ENCODE measurements at regions of chr18 and their contacts with region 1.

Region 1: DNA sequence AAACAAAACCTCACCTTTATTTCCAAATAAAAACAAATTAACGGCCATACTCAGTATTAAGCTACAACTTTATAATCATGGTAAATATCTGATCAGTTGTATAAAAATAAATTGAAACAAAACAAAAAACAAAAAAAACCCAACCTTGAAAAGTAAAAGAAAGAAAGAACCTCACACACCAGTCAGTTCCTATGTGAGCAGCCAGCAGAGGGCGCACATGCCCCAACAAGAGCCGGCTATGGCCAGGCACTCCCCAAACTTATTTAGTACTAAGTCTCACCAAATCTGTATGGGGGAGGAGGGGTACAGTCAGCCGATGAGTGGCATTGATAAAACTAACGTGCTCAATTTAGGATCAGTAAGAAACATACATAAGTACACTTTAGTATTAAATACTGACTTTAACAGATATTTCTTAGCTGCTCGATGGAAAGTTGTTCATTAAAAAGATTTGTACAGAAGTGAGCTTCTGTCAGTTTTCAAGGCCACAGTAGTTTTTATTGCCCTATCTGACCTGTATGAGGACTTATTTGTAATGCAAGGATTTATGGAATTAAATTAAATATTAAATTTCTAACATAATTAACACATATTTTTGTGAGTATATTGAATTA is 172.6 kb downstream of the TCF4 start:
- DNase-seq: peak; percentile 90
- H3K4me3 ChIP-seq: no peak overlapping the region
- H3K27ac ChIP-seq: peak overlapping the region; percentile 13
- H3K4me1 ChIP-seq: peaks cover 45% of the 10 kb centered on the region
- H3K27me3 ChIP-seq: no peaks in the 10 kb centered on the region
- CTCF ChIP-seq: peak; percentile 79 to 91
- POLR2A ChIP-seq: no peak

Region 2: GRCh38 chr18:55425698-55426097 is 10.3 kb after region 1 on chr18:
- CTCF ChIA-PET with region 1: interaction called, 11 read pairs
- POLR2A ChIA-PET with region 1: no interaction called
- dilution Hi-C with region 1: no loop called
- intact Hi-C with region 1: no loop called
- DNase-seq: no peak
- H3K4me3 ChIP-seq: no peak overlapping the region
- H3K27ac ChIP-seq: no peak overlapping the region
- H3K4me1 ChIP-seq: peaks cover 23% of the 10 kb centered on the region
- H3K27me3 ChIP-seq: no peaks in the 10 kb centered on the region
- CTCF ChIP-seq: no peak
- POLR2A ChIP-seq: no peak

Region 3: GRCh38 chr18:55477860-55478581 is 62.7 kb after region 1 on chr18:
- CTCF ChIA-PET with region 1: interaction called, 6 read pairs
- POLR2A ChIA-PET with region 1: no interaction called
- dilution Hi-C with region 1: no loop called
- intact Hi-C with region 1: loop called (anchors 2 kb)
- DNase-seq: no peak
- H3K4me3 ChIP-seq: peak overlapping the region; percentile 31 to 91 (median 80)
- H3K27ac ChIP-seq: peak overlapping the region; percentile 95
- H3K4me1 ChIP-seq: peaks cover 35% of the 10 kb centered on the region
- H3K27me3 ChIP-seq: no peaks in the 10 kb centered on the region
- CTCF ChIP-seq: no peak
- POLR2A ChIP-seq: no peak

Region 4: DNA sequence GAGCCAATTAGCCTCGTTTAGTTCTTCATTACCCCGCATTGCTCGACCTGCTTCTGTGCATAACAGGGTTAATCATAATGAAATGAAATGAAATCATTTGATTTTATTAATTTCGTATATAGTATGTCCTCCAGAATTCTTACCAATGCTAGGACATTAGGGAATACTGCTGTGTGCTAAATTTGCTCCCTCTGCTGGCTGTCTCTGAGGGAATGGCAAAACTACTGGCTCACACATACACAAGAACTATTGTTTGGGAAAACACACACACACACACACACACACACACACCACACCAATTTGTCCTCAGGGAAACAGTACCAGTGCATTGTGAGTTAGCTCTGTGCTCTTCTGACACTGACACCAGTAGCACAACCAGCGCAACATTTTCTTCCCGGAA is 445.9 kb after region 1 on chr18:
- CTCF ChIA-PET with region 1: interaction called, 10 read pairs
- POLR2A ChIA-PET with region 1: no interaction called
- dilution Hi-C with region 1: no loop called
- intact Hi-C with region 1: loop called (anchors 10 kb)
- DNase-seq: peak; percentile 65
- H3K4me3 ChIP-seq: no peak overlapping the region
- H3K27ac ChIP-seq: no peak overlapping the region
- H3K4me1 ChIP-seq: peaks cover 5% of the 10 kb centered on the region
- H3K27me3 ChIP-seq: no peaks in the 10 kb centered on the region
- CTCF ChIP-seq: peak; percentile 41 to 44
- POLR2A ChIP-seq: no peak

Measured in endothelial cell of umbilical vein (primary cell).